GM18951 (cell line): ENCODE measurements at regions of chr10 and their contacts with region 1.

Region 1: DNA sequence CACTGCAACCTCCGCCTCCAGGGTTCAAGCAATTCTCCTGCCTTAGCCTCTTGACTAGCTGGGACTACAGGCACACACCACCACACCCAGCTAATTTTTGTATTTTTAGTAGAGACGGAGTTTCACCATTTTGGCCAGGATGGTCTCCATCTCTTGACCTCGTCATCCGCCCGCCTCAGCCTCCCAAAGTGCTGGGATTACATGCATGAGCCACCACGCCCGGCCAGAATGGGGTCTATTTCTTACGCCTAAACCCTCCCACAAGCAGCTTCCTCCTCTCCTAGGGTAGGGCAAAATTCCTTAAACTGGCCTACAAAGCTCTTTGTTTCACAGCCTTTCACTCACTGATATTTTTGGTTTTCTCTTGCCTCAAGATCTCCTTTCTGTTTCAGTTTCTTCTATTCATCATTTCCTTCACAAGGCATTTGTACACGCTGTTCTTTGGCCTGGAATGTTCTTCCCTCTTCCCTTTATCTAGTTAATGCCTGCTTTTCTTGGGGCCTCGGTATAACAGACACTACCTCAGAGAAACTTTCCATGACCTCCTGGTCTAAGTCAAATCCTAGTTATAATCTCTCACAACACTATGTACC is 6.7 kb downstream of the CPEB3 start:
- POLR2A ChIP-seq: no peak

Region 2: DNA sequence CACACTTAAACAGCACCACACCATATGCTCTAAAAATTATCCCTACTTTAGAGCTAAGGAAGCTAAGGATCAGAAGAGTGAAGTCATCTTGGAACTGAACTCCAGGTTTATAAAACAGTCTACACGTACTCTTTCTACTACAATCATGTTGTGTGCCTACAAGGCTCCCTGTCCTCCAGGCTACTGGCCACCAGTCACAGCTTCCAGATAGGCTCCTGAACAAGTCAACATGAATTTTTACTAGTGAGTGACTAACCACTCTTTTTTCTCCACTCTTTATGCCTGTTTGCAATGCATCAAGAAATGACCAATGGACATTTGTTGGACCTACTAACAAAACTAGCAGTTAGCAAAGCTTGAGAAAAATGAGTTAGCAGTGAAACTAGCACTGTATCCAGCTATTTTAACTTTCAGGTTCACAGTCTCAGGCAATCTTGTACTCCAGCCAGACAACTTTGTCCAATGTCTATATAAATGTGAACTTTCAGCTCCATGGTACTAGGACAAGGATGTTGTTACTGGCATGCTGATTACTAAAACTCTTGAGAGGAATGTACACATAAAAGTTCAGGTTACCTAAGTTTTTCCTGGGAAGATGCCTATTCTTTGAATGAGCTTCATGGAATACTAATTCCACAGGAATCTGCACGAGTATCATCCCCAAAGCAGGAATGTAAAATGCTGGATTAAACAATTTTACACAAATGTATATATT is 180.7 kb before region 1 on chr10:
- in situ Hi-C with region 1: loop called (anchors 10 kb)
- POLR2A ChIP-seq: no peak